ENCODE measurements at regions of chr3 and their contacts with region 1.

Region 1: DNA sequence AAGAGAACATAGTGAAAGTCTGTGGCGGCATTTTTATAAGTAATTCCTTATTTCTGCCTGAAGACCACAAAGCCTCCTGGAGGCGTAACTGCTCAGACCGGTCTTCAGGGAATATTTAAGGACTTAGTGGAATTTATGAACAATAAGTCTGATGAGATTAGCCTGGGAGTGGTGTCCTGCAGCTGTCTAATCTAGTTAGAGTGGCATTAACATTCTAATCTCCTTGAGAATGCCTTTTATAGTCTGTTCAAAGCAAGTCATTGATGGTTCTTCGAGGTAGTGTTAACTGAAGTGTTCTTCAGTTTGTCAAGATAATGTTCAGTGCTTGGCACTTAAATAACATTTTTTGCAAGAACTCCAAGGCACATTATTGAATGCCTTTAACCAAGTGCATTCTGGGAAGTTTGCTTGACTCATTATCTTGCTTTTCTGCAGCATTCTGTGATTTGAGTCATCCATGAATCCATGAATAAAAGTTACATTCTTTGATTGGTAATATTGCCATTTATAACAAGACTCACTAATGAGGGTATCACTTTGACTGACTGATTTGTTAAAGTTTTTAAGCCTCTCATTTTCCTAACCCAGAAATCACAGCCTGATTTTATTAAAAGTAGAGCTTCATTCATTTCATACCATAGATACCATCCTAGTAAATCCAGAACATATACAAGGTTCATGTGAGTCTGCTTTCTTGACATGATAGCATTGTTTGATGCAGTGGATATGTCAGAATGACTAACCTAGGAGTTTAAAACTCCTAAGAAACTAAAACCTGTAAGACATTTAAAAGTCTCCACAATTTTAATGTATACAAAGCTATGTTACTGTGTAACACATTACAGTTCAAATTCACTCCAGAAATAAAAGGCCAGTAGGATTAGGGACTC is 12.5 kb downstream of the RBM5 start:
- DNase-seq: no peak
- ATAC-seq: no peak

Region 2: DNA sequence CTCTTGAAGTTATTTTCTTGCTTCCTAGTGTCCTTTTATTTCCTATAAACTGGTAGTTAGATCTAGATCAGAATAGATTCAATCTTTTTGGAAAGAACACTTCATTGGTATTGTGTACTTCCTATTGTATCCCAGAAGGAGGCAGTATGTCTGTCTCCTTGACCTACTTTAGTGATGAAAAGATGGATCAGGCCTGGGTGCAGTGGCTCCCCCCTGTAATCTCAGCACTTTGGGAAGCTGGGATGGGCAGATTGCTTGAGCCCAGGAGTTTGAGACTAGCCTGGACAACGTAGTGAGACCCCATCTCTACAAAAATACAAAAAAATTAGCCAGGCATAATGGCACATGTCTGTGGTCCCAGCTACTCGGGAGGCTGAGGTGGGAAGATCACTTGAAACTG is 534.9 kb before region 1 on chr3:
- intact Hi-C with region 1: loop called (anchors 5 kb)
- DNase-seq: no peak
- ATAC-seq: no peak

Region 3: GRCh38 chr3:49939858-49940666 is 161.1 kb before region 1 on chr3 and contains the start of gene RBM6:
- intact Hi-C with region 1: no loop called
- DNase-seq: peak; percentile 97
- ATAC-seq: peak; percentile 100
- total RNA-seq, gene RBM6: 148 TPM